ENCODE measurements at regions of chr18 and their contacts with region 1.

Region 1: GRCh38 chr18:21933931-21934765 is 193.6 kb downstream of the MIB1 start:
- DNase-seq: no peak
- H3K4me3 Mint-ChIP-seq: no peak overlapping the region
- H3K27ac Mint-ChIP-seq: no peak overlapping the region
- H3K4me1 Mint-ChIP-seq: no peaks in the 10 kb centered on the region
- H3K27me3 Mint-ChIP-seq: no peaks in the 10 kb centered on the region

Region 2: GRCh38 chr18:21918693-21919092 is 15.5 kb before region 1 on chr18:
- CTCF ChIA-PET with region 1: no interaction called
- POLR2A ChIA-PET with region 1: no interaction called
- DNase-seq: no peak
- H3K4me3 Mint-ChIP-seq: no peak overlapping the region
- H3K27ac Mint-ChIP-seq: no peak overlapping the region
- H3K4me1 Mint-ChIP-seq: no peaks in the 10 kb centered on the region
- H3K27me3 Mint-ChIP-seq: peaks cover 6% of the 10 kb centered on the region

Region 3: GRCh38 chr18:22826726-22827125 is 892.6 kb after region 1 on chr18:
- CTCF ChIA-PET with region 1: no interaction called
- POLR2A ChIA-PET with region 1: interaction called, 11 read pairs
- DNase-seq: no peak
- H3K4me3 Mint-ChIP-seq: no peak overlapping the region
- H3K27ac Mint-ChIP-seq: no peak overlapping the region
- H3K4me1 Mint-ChIP-seq: no peaks in the 10 kb centered on the region
- H3K27me3 Mint-ChIP-seq: peaks cover 23% of the 10 kb centered on the region